A549 (cell line): ENCODE measurements at regions of chr13 and their contacts with region 1.

Region 1: DNA sequence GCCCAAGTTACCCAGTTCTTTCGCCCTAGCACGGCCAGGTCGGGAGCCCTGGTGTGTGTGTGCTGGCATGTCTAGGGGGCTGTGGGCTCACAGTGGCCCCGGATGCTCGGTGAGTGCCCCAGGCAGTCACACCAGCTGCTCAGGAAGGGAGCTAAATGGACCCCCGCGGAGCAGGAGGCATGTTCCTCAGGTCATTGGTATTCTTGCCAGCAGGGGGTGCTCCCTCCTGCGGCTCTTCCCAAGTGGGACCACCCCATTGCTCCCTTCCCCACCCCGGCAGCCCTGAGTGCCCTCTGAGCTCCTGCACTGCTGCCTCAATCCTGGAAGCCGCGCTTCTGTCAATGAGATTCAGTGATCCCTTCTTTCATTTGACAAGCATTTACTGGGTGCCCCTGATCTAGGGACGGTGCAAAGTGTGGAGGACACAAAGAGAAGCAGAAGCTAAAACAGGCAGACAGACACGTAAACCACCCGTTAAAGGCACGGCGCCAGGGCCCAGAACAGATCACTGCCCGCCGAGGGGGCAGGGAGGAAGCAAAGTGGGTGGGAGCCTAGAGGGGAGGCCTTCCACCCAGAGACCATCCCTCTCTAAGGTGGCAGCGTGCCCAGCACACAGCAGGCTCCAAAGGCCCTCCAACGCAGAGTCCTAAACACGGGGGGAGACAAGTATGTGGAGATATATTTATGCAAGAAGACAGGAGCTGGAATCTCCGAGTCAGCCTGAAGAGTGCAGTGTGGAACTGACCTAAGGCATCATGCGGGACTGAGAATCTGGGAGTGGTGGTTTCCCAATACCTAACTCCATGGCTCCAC is 5.2 kb upstream of the ADPRHL1 start:
- DNase-seq: peak; percentile 12 to 21
- ATAC-seq: peak; percentile 43 to 72; a peak in 4 of 6 replicates
- H3K4me3 ChIP-seq: no peak overlapping the region
- H3K27ac ChIP-seq: no peak overlapping the region
- H3K4me1 ChIP-seq: no peaks in the 10 kb centered on the region
- CTCF ChIP-seq: peak; percentile 25; the same call in 1 of the 3 replicates
- EP300 ChIP-seq: no peak
- POLR2A ChIP-seq: no peak
- RAD21 ChIP-seq: no peak

Region 2: DNA sequence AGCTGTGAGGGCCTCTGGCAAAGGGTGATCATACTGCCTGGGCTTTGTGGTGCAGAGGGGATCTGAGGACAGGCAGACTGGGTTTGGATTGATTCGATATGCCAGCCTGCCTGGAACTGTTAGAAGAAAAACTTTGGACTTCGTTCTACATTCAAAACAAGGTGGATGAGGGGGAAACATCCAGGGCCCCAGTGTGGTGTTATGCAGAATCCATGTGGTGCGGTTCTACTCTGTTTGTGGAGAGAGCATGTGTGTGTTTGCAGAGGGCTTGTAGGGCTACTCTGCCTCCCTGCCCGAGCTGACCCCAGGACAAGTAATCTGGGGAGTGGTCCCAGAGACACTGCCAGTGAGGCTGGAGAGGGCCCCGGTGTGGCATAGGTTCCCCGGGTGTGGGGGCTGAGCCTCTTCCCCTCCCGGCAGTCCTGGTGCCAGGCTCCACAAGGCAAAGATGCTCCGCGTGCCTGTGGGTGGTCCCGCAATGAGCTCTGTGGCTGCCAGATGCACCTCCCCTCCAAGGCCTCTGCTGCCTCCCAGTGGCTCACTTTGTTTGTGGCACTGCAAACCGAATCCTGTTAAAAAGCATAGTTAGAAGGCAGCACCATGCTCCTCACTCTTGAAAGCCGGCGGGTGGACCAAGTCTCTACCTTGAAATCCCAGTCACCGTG is 103.8 kb after region 1 on chr13:
- CTCF ChIA-PET with region 1: interaction called, 12 read pairs
- POLR2A ChIA-PET with region 1: no interaction called
- DNase-seq: peak; percentile 40 to 54
- ATAC-seq: peak; percentile 81 to 91
- H3K4me3 ChIP-seq: no peak overlapping the region
- H3K27ac ChIP-seq: no peak overlapping the region
- H3K4me1 ChIP-seq: no peaks in the 10 kb centered on the region
- CTCF ChIP-seq: peak; percentile 50
- EP300 ChIP-seq: no peak
- POLR2A ChIP-seq: no peak
- RAD21 ChIP-seq: peak; percentile 55 to 66